PC-9 (cell line): ENCODE measurements at regions of chr2 and their contacts with region 1.

Region 1: GRCh38 chr2:148906124-148906523 is 31.1 kb downstream of the KIF5C start:
- DNase-seq: no peak
- H3K4me3 ChIP-seq: no peak overlapping the region
- H3K27ac ChIP-seq: no peak overlapping the region
- H3K4me1 ChIP-seq: no peaks in the 10 kb centered on the region
- H3K27me3 ChIP-seq: no peaks in the 10 kb centered on the region
- CTCF ChIP-seq: no peak

Region 2: GRCh38 chr2:148814143-148814859 is 91.8 kb before region 1 on chr2:
- CTCF ChIA-PET with region 1: interaction called, 11 read pairs
- POLR2A ChIA-PET with region 1: no interaction called
- intact Hi-C with region 1: no loop called
- DNase-seq: peak; percentile 31 to 86
- H3K4me3 ChIP-seq: peak overlapping the region; percentile 40; the same call in 1 of the 2 replicates
- H3K27ac ChIP-seq: peak overlapping the region; percentile 81
- H3K4me1 ChIP-seq: peaks cover 21% of the 10 kb centered on the region
- H3K27me3 ChIP-seq: no peaks in the 10 kb centered on the region
- CTCF ChIP-seq: no peak